IMR-90 (cell line): ENCODE measurements at regions of chr3 and their contacts with region 1.

Region 1: GRCh38 chr3:108477511-108478147 is 32.8 kb downstream of the MYH15 start:
- DNase-seq: peak; percentile 72
- ATAC-seq: peak; percentile 76
- H3K4me3 ChIP-seq: no peak overlapping the region
- H3K27ac ChIP-seq: no peak overlapping the region
- H3K4me1 ChIP-seq: 0 out of 2 replicates have a peak, but pooled peaks cover 2% of the 10 kb centered on the region
- H3K27me3 ChIP-seq: no peaks in the 10 kb centered on the region
- CTCF ChIP-seq: peak; percentile 73
- POLR2A ChIP-seq: no peak
- RAD21 ChIP-seq: peak; percentile 83

Region 2: GRCh38 chr3:107660306-107660976 is 817.2 kb before region 1 on chr3:
- CTCF ChIA-PET with region 1: interaction called, 3 read pairs
- POLR2A ChIA-PET with region 1: no interaction called
- dilution Hi-C with region 1: no loop called
- in situ Hi-C with region 1: no loop called
- intact Hi-C with region 1: loop called (anchors 2 kb)
- DNase-seq: peak; percentile 77
- ATAC-seq: peak; percentile 41
- H3K4me3 ChIP-seq: no peak overlapping the region
- H3K27ac ChIP-seq: peak overlapping the region; percentile 31; the same call in 1 of the 2 replicates
- H3K4me1 ChIP-seq: peaks cover 5% of the 10 kb centered on the region
- H3K27me3 ChIP-seq: no peaks in the 10 kb centered on the region
- CTCF ChIP-seq: peak; percentile 75
- POLR2A ChIP-seq: no peak
- RAD21 ChIP-seq: peak; percentile 59

Region 3: GRCh38 chr3:107938143-107938542 is 539.5 kb before region 1 on chr3:
- CTCF ChIA-PET with region 1: interaction called, 4 read pairs
- POLR2A ChIA-PET with region 1: no interaction called
- dilution Hi-C with region 1: no loop called
- in situ Hi-C with region 1: no loop called
- intact Hi-C with region 1: loop called (anchors 1 kb)
- DNase-seq: peak; percentile 42
- ATAC-seq: peak; percentile 62
- H3K4me3 ChIP-seq: no peak overlapping the region
- H3K27ac ChIP-seq: no peak overlapping the region
- H3K4me1 ChIP-seq: no peaks in the 10 kb centered on the region
- H3K27me3 ChIP-seq: peaks cover 2% of the 10 kb centered on the region
- CTCF ChIP-seq: peak; percentile 57
- POLR2A ChIP-seq: no peak
- RAD21 ChIP-seq: peak; percentile 64

Region 4: GRCh38 chr3:108153451-108153981 is 324.1 kb before region 1 on chr3:
- CTCF ChIA-PET with region 1: interaction called, 6 read pairs
- POLR2A ChIA-PET with region 1: no interaction called
- dilution Hi-C with region 1: no loop called
- in situ Hi-C with region 1: no loop called
- intact Hi-C with region 1: loop called (anchors 2 kb)
- DNase-seq: peak; percentile 75
- ATAC-seq: peak; percentile 82
- H3K4me3 ChIP-seq: no peak overlapping the region
- H3K27ac ChIP-seq: no peak overlapping the region
- H3K4me1 ChIP-seq: peaks cover 11% of the 10 kb centered on the region
- H3K27me3 ChIP-seq: no peaks in the 10 kb centered on the region
- CTCF ChIP-seq: peak; percentile 65
- POLR2A ChIP-seq: no peak
- RAD21 ChIP-seq: peak; percentile 76

Region 5: DNA sequence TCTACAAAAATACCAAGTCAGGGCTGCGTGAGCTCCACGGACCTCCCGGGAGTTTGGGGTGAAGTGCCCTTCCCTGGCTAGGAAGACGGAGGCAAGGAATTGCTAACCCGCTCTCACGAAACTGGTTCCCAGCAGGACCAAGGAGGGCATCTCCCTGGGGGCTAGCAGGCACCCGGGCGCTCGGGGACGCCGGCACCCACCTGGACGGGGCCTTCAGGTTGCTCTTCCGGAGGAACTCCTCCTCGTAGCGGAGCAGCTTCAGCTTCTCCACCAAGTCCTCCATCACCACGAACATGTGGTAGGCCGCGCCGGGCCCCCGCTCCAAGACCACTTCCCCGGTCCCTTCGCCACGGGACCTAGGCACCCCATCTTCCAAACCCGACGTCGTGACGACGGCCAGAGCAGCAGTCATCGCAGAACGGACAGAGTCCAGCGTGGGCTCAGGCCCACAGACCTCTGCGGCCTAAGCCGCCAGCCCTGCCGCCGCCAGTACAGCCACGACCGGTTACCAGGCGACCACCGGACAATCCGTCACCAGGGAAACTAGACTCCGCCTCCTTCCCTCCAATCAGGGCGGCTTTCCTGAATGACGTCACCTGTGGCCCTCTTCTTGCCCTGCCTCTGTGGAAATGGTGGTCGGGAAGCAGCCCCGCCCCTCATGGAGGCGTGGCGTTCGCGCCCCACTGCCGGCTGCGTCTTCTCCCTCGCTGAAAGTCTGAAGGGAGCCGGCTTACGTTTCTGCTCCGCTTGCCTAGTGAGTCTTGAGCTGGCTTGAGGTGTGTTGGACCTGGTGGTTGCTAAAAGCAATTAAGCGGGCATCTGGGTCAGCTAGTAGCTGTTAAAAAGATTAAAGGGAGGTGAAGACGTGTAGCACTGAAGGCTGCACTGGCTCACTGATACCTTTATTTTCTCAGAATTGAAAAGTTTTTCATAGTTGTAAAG is 255.4 kb before region 1 on chr3 and contains the start of gene IFT57:
- CTCF ChIA-PET with region 1: interaction called, 4 read pairs
- POLR2A ChIA-PET with region 1: no interaction called
- dilution Hi-C with region 1: no loop called
- in situ Hi-C with region 1: no loop called
- intact Hi-C with region 1: loop called (anchors 1 kb)
- DNase-seq: peak; percentile 98
- ATAC-seq: peak; percentile 96
- H3K4me3 ChIP-seq: peak within 1 kb of the TSS; percentile 84
- H3K27ac ChIP-seq: peak within 1 kb of the TSS; percentile 50
- H3K4me1 ChIP-seq: peaks cover 8% of the 10 kb centered on the region
- H3K27me3 ChIP-seq: no peaks in the 10 kb centered on the region
- CTCF ChIP-seq: no peak
- POLR2A ChIP-seq: peak; percentile 92
- RAD21 ChIP-seq: no peak
- total RNA-seq, gene IFT57: 35.3 and 46.9 TPM in 2 replicates